ENCODE measurements at regions of chr16 and their contacts with region 1.

Region 1: GRCh38 chr16:27355610-27356009 is 41.8 kb downstream of the IL4R start:
- DNase-seq: peak in 1 of 2 donors; percentile 19
- ATAC-seq: no peak
- H3K4me3 ChIP-seq: no peak overlapping the region
- H3K27ac ChIP-seq: no peak overlapping the region
- H3K4me1 ChIP-seq: no peaks in the 10 kb centered on the region
- H3K27me3 ChIP-seq: no peaks in the 10 kb centered on the region
- CTCF ChIP-seq: no peak
- POLR2A ChIP-seq: no peak

Region 2: GRCh38 chr16:26913851-26914250 is 441.8 kb before region 1 on chr16:
- in situ Hi-C with region 1: no loop called
- intact Hi-C with region 1: no loop called
- DNase-seq: no peak
- ATAC-seq: no peak
- H3K4me3 ChIP-seq: no peak overlapping the region
- H3K27ac ChIP-seq: no peak overlapping the region
- H3K4me1 ChIP-seq: no peaks in the 10 kb centered on the region
- H3K27me3 ChIP-seq: no peaks in the 10 kb centered on the region
- CTCF ChIP-seq: no peak
- POLR2A ChIP-seq: no peak

Region 3: DNA sequence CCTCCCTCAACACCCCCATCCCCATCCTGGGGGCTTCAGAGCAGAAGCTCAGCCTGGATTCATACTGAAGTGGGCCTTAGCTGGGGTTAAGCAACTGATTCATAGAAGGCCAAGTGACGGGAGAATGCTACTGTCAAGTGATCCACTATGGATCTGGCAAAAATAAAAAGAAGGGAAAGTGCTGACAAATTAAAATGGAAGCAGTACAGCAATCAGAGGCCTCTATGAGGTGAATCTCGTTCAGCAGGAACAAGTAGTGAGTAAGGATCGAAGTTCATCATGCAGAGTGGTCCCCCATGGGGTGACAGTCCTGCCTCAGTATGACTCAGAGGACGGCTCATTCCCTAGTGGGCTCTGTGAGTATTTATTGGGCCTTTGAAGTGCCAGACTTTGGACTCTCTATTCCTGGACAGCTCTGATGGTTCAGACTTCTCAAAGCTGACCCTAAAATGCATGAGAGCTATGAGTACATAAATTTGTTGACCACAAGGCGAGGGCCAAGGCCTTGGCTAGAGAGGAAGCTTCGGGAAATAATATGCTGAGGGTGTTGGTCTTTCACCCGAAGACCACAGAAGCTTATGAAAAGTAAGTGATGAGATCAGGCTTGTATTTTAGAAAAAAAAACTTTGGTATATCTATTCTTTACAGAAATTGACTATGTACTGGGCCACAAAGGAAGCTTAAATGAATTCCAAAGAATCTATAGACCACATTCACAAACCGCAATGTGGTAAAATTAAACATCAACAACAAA is 81.8 kb before region 1 on chr16:
- in situ Hi-C with region 1: no loop called
- intact Hi-C with region 1: no loop called
- DNase-seq: no peak
- ATAC-seq: no peak
- H3K4me3 ChIP-seq: no peak overlapping the region
- H3K27ac ChIP-seq: no peak overlapping the region
- H3K4me1 ChIP-seq: peaks cover 0 to 4% of the 10 kb centered on the region in 2 donors
- H3K27me3 ChIP-seq: no peaks in the 10 kb centered on the region
- CTCF ChIP-seq: no peak
- POLR2A ChIP-seq: no peak

Region 4: DNA sequence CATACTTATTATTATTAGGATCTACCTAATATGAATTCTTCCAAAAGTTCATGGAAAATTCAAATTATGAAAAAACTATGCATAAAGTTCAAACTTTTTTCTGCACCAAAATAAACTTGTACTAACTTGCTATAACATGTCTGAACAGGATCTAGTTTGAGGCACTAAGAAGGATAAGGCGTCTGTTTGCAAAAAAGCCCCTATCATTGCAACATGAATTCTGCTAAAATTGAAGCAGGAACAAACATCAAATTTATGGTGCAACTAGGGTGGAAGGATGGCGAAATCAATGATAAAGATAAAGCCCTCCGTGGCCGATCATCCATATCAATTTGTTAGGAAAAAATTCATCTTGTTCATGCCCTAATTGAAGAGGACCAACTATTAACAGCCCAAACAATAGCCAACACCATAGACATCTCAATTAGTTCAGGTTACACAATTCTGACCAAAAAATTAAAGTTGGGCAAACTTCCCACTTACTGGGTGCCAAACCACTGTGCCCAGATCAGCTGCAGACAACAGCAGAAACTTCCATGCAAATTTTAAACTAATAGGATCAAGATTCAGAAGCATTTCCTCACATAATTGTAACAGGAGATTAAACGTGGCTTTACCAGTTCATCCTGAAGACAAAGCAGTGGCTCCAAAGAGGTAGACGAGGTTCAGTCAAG is 59.3 kb after region 1 on chr16:
- in situ Hi-C with region 1: loop called in 1 of 4 experiments (anchors 10 kb)
- intact Hi-C with region 1: no loop called
- DNase-seq: no peak
- ATAC-seq: no peak
- H3K4me3 ChIP-seq: no peak overlapping the region
- H3K27ac ChIP-seq: no peak overlapping the region
- H3K4me1 ChIP-seq: no peaks in the 10 kb centered on the region
- H3K27me3 ChIP-seq: no peaks in the 10 kb centered on the region
- CTCF ChIP-seq: no peak
- POLR2A ChIP-seq: no peak